ENCODE measurements at regions of chr12 and their contacts with region 1.

Region 1: GRCh38 chr12:123457980-123458783 is at the start of gene SNRNP35:
- DNase-seq: peak; percentile 96
- ATAC-seq: peak; percentile 79
- H3K4me3 ChIP-seq: peak within 1 kb of the TSS; percentile 76 to 99 (median 95)
- H3K4me3 Mint-ChIP-seq: peak within 1 kb of the TSS; percentile 99
- H3K27ac ChIP-seq: peak within 1 kb of the TSS; percentile 92 to 98
- H3K27ac Mint-ChIP-seq: peak within 1 kb of the TSS; percentile 100
- H3K4me1 ChIP-seq: peaks cover 12 to 17% of the 10 kb centered on the region in 2 donors
- H3K4me1 Mint-ChIP-seq: peaks cover 26% of the 10 kb centered on the region
- H3K27me3 ChIP-seq: no peaks in the 10 kb centered on the region
- H3K27me3 Mint-ChIP-seq: no peaks in the 10 kb centered on the region
- CTCF ChIP-seq: no peak
- total RNA-seq, gene SNRNP35: 57.8 and 58.2 TPM in 2 replicates

Region 2: GRCh38 chr12:123017753-123018152 is 440.4 kb before region 1 on chr12:
- CTCF ChIA-PET with region 1: no interaction called
- POLR2A ChIA-PET with region 1: interaction called, 12 read pairs
- intact Hi-C with region 1: no loop called
- DNase-seq: no peak
- ATAC-seq: no peak
- H3K4me3 ChIP-seq: no peak overlapping the region
- H3K4me3 Mint-ChIP-seq: no peak overlapping the region
- H3K27ac ChIP-seq: no peak overlapping the region
- H3K27ac Mint-ChIP-seq: no peak overlapping the region
- H3K4me1 ChIP-seq: no peaks in the 10 kb centered on the region
- H3K4me1 Mint-ChIP-seq: no peaks in the 10 kb centered on the region
- H3K27me3 ChIP-seq: no peaks in the 10 kb centered on the region
- H3K27me3 Mint-ChIP-seq: no peaks in the 10 kb centered on the region
- CTCF ChIP-seq: no peak

Region 3: DNA sequence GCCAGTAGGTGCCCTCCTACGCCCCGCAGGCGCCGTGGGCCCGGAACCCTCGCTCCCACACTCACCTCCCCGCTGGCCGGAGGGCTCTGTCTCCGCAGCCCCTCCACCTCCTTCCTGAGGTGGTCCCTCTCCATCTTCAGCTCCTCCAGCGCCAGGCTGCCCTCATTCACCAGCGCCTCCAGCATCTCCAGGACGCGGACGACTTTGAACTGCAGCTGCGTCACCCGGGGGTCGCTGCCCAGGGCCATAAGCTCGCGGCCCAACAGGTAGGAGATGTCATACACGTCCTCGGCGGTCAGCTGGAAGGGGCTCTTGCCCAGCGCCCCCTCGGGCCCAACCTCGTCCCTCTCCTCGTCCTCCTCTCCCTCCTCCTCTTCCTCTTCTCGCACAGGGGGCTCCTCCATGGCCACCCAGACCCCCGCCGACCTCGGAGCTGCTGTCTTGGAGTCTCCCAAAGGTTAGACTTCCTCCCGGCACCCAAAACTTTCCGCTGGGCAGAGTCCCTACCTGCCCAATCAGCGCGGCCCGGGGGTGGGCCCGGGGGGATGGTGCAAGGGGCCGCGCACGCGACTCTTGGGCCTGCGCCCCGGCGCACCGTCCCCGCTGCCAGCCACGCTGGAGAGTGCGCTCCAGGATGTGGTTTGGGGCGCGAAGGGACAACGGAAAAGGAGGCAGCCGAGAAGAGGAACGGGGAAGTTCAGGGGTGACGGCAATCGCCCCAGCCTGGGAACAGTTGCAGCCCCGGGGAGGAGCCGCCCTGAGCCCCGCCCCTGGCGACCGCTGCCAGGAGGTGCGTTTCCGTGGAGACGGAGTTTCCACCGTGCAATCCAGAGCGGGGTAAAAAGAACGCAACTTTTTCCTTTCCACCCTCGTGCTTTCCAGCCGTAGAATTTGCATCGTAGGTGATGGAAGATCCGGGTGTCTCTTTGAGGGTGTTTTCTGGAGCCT is 21.9 kb before region 1 on chr12 and contains the start of gene RILPL2:
- CTCF ChIA-PET with region 1: interaction called, 7 read pairs
- POLR2A ChIA-PET with region 1: interaction called, 11 read pairs
- intact Hi-C with region 1: no loop called
- DNase-seq: peak; percentile 93
- ATAC-seq: peak; percentile 86
- H3K4me3 ChIP-seq: peak within 1 kb of the TSS; percentile 79 to 99 (median 97)
- H3K4me3 Mint-ChIP-seq: peak within 1 kb of the TSS; percentile 96
- H3K27ac ChIP-seq: peak within 1 kb of the TSS; percentile 91 to 95
- H3K27ac Mint-ChIP-seq: peak within 1 kb of the TSS; percentile 96
- H3K4me1 ChIP-seq: peaks cover 30 to 46% of the 10 kb centered on the region in 2 donors
- H3K4me1 Mint-ChIP-seq: peaks cover 47% of the 10 kb centered on the region
- H3K27me3 ChIP-seq: no peaks in the 10 kb centered on the region
- H3K27me3 Mint-ChIP-seq: no peaks in the 10 kb centered on the region
- CTCF ChIP-seq: no peak
- total RNA-seq, gene RILPL2: 12.6 and 13.0 TPM in 2 replicates

Region 4: DNA sequence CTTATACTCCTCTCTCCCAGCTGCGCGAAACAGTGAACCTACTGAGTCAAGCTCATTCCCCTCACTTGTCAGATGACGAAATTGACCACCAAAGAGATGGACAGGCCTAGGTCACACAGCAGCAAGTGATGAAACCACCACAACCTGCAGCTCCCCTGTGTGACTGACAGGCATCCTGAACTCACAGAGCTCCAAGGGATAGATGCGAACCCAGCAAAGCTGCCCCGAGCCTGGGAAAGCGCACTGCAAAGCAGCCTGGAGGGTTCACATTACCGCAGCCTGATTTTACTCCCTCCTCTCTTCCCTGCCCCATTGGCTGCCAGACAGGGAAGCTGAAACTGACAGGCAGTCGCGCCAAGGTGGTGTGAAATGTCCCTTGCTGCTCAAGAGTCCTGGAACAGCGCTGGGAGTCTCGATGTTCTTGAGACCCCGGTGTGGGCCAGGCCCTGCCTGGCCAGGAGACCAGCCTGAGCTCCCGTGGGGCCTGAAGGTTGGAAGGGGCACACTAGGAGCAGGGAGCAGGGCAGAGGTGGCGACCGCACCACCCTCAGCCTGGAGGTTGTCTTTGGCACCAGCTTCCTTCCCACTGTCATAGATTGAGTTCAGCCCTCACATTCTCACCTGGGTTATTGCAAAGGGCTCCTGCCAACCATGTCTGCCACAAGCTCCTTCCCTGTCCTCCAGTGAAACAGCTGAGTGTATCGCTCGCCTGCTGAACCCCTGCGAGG is 36.1 kb after region 1 on chr12:
- CTCF ChIA-PET with region 1: no interaction called
- POLR2A ChIA-PET with region 1: no interaction called
- intact Hi-C with region 1: no loop called
- DNase-seq: no peak
- ATAC-seq: no peak
- H3K4me3 ChIP-seq: no peak overlapping the region
- H3K4me3 Mint-ChIP-seq: no peak overlapping the region
- H3K27ac ChIP-seq: no peak overlapping the region
- H3K27ac Mint-ChIP-seq: no peak overlapping the region
- H3K4me1 ChIP-seq: no peaks in the 10 kb centered on the region
- H3K4me1 Mint-ChIP-seq: no peaks in the 10 kb centered on the region
- H3K27me3 ChIP-seq: no peaks in the 10 kb centered on the region
- H3K27me3 Mint-ChIP-seq: no peaks in the 10 kb centered on the region
- CTCF ChIP-seq: no peak

Region 5: GRCh38 chr12:123533672-123534643 is 75.8 kb after region 1 on chr12 and contains the start of gene RILPL1:
- CTCF ChIA-PET with region 1: no interaction called
- POLR2A ChIA-PET with region 1: no interaction called
- intact Hi-C with region 1: loop called (anchors 10 kb)
- DNase-seq: peak; percentile 75
- ATAC-seq: peak; percentile 78
- H3K4me3 ChIP-seq: peak within 1 kb of the TSS; percentile 48 to 67 (median 53)
- H3K4me3 Mint-ChIP-seq: peak within 1 kb of the TSS; percentile 86
- H3K27ac ChIP-seq: no peak within 1 kb of the TSS
- H3K27ac Mint-ChIP-seq: peak within 1 kb of the TSS; percentile 56
- H3K4me1 ChIP-seq: peaks cover 21 to 23% of the 10 kb centered on the region in 2 donors
- H3K4me1 Mint-ChIP-seq: peaks cover 16% of the 10 kb centered on the region
- H3K27me3 ChIP-seq: peaks cover 0 to 7% (median under 1%) of the 10 kb centered on the region in 4 experiments
- H3K27me3 Mint-ChIP-seq: peaks cover 2% of the 10 kb centered on the region
- CTCF ChIP-seq: peak; percentile 53
- total RNA-seq, gene RILPL1: 2.6 and 2.8 TPM in 2 replicates

Region 6: GRCh38 chr12:124032265-124032886 is 574.2 kb after region 1 on chr12:
- CTCF ChIA-PET with region 1: no interaction called
- POLR2A ChIA-PET with region 1: no interaction called
- intact Hi-C with region 1: no loop called
- DNase-seq: peak; percentile 46
- ATAC-seq: peak; percentile 43
- H3K4me3 ChIP-seq: no peak overlapping the region
- H3K4me3 Mint-ChIP-seq: no peak overlapping the region
- H3K27ac ChIP-seq: no peak overlapping the region
- H3K27ac Mint-ChIP-seq: no peak overlapping the region
- H3K4me1 ChIP-seq: no peaks in the 10 kb centered on the region
- H3K4me1 Mint-ChIP-seq: no peaks in the 10 kb centered on the region
- H3K27me3 ChIP-seq: no peaks in the 10 kb centered on the region
- H3K27me3 Mint-ChIP-seq: peaks cover 10% of the 10 kb centered on the region
- CTCF ChIP-seq: peak; percentile 75

Measured in B cell (primary cell).